Posterior cingulate gyrus (tissue), 11 donors: ENCODE measurements at regions of chr3 and their contacts with region 1.

Region 1: DNA sequence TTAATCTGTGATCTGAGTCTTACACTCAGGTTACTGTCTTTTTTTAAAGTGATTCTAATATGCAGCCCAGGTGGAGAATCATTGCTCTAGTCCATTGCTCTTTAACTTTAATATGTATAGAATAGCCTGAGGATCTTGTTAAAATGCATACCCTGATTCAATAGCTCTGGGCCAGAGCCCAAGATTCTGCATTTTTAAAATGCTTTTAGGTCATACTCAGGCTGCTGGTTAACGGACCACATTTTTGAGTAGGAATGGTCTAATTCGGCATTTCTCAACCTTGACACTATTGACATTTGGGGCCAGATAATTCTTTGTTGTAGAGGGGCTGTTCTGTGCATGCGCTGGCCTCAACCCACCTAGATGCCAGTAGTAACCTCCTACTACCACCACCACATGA is 20.9 kb upstream of the FSTL1 start:
- DNase-seq: no peak

Region 2: DNA sequence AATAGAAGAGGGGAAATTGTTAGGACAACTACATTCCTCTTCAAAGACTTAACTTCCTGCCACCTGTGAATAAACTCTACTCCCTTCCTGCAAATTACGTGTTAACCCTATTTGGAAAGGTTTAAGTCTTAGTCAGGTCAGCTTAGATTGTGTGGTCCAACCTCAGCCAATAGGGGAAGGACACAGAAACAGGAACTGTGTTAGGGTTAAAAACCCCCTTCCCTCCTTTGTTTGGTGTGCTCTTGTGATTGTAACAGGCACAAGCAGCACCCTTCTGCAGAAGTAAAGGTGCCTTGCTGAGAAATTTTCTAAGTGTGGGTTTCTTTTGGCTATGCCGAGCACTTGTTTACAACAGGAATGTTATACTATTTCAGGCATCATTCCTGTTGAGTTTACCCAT is 24.2 kb after region 1 on chr3:
- intact Hi-C with region 1: loop called (anchors 2 kb)
- DNase-seq: no peak